ENCODE measurements at regions of chr17 and their contacts with region 1.

Region 1: DNA sequence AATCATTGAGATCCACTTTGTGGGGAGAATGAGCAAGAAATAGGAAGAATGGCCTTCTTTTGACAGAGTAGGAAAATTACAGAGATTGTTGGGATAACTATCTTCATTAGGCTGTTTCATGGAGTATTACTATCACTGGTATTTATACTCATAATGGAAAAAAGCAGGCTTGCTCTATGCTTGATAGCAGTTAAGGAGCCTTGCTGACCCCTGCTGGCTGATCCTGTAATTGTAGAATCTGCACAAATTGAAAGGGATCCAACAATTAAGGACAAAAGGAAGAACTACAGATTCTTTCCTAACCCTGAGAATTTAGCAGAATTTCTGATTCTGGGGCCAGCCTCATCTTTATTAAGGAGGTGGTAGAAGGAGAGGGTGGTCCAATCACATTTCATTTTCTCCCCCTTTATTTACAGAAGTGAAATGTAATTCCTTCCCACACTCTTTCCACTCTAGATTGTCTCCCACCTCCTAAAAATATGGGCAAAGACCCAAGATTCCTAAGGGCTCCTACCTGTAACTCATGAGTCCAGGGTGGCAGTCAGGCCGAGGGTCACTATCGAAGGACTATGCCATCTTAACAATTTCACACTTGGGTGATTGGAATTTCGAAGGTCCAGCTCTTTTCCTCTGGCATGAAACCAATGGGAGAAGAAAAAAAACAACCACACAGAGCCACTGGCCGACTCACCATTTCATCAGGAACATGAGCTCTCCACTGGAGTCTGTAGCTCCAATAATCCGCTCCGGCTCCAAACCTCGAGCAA is 26.3 kb downstream of the NFE2L1 start:
- DNase-seq: peak; percentile 62 to 71
- H3K4me3 ChIP-seq: no peak overlapping the region
- H3K27ac ChIP-seq: no peak overlapping the region
- H3K4me1 ChIP-seq: no peaks in the 10 kb centered on the region
- H3K27me3 ChIP-seq: no peaks in the 10 kb centered on the region
- CTCF ChIP-seq: peak; percentile 94

Region 2: GRCh38 chr17:48060249-48060648 is 14.2 kb before region 1 on chr17:
- CTCF ChIA-PET with region 1: interaction called, 17 read pairs
- POLR2A ChIA-PET with region 1: no interaction called
- intact Hi-C with region 1: no loop called
- DNase-seq: no peak
- H3K4me3 ChIP-seq: no peak overlapping the region
- H3K27ac ChIP-seq: no peak overlapping the region
- H3K4me1 ChIP-seq: peaks cover 11% of the 10 kb centered on the region
- H3K27me3 ChIP-seq: no peaks in the 10 kb centered on the region
- CTCF ChIP-seq: no peak

Region 3: DNA sequence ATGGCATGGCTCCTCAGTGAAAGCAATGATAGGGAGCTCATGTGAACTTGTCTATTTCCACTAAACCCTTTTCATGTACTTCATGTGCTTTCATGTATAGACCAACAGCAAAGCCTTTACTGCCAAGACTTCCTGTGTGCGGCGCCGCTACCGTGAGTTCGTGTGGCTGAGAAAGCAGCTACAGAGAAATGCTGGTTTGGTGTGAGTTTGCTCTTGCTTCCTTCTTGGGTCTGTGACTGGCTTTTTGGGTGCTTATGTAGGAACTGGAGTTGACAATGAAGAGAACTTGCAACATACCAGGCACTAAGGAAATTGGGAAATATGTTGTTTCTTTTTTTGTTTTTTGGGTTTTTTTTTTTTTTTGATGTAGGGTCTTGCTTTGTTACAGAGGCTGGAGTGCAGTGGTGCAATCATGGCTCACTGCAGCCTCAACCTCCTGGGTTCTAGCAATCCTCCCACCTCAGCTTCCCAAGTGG is 38.7 kb after region 1 on chr17:
- CTCF ChIA-PET with region 1: no interaction called
- POLR2A ChIA-PET with region 1: no interaction called
- intact Hi-C with region 1: no loop called
- DNase-seq: no peak
- H3K4me3 ChIP-seq: no peak overlapping the region
- H3K27ac ChIP-seq: no peak overlapping the region
- H3K4me1 ChIP-seq: peaks cover 8% of the 10 kb centered on the region
- H3K27me3 ChIP-seq: no peaks in the 10 kb centered on the region
- CTCF ChIP-seq: no peak

Region 4: DNA sequence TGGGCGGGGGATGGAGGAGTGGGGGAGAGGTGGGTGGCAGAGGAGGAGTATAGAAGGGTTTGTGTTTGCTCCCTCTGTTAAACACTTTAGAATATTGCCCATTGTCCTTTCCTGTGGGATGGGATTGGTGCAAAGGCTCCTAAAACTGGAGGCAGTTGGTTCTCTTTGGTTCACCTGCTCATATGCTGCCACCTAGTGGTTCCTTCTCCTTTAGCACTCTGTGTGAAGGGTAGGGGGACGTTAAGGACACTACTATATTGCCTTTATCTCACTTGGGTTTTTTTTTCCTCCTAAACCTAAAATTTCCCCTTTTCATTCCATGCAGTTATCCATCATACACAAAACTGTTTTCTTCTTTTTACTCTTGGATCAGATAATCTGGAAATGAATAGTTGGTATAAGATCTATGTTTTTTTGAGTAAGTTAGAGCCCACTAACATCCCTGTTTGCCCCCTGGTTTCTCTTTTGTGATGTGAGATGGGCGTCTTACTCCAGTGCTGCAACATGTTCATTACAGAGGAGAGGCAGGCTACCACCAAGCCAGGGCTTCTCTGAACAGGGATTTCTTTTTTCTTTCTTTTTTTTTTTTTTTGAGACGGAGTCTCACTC is 56.8 kb after region 1 on chr17:
- CTCF ChIA-PET with region 1: interaction called, 3 read pairs
- POLR2A ChIA-PET with region 1: no interaction called
- intact Hi-C with region 1: loop called (anchors 2 kb)
- DNase-seq: peak; percentile 47 to 64
- H3K4me3 ChIP-seq: no peak overlapping the region
- H3K27ac ChIP-seq: no peak overlapping the region
- H3K4me1 ChIP-seq: peaks cover 15% of the 10 kb centered on the region
- H3K27me3 ChIP-seq: no peaks in the 10 kb centered on the region
- CTCF ChIP-seq: peak; percentile 94

Measured in PC-9 (cell line).